ENCODE measurements at regions of chr17 and their contacts with region 1.

Region 1: DNA sequence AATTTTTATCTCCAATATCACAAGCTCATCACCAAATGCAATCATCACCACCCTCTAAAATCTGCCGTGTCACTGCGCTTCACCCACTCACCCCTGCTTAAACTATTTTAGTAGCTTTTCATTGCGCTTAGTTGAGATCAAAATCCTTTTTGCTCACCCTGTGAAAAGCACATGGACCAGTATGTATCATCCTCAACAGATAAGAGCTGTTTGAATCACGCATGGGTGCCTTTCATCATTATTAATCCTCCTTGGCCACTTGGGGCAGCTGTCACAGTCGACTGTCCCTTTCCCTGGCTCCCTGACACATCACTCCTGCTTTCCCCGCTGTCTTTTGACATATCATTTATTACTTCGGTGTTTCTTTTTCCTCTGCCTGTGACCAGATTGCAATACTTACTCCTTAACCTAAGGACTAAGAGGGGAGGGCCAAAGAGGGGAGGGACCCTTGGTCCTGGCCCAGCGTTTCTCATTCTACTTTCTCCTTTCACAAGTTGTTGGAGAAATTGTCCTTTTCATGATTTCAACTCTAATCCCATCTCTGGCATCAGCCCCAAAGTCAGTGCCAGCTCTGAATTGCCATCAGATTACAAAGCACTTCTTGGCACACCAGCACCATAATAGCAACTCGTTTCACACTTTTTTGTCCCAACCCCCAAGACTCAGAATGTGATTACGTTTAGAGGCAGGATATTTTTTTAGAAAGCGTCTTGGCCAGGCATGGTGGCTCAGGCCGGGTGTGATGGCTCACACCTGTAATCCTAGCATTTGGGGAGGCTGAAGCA is 8.6 kb upstream of the KDM6B start:
- DNase-seq: peak; percentile 15
- H3K4me3 ChIP-seq: no peak overlapping the region
- H3K27ac ChIP-seq: no peak overlapping the region
- H3K4me1 ChIP-seq: peaks cover 0 to 5% (median 0%) of the 10 kb centered on the region in 6 donors
- H3K27me3 ChIP-seq: peaks cover 0 to 6% (median 0%) of the 10 kb centered on the region in 7 donors
- CTCF ChIP-seq: no peak
- POLR2A ChIP-seq: no peak

Region 2: GRCh38 chr17:7862692-7863437 is 37.5 kb after region 1 on chr17:
- intact Hi-C with region 1: loop called (anchors 5 kb)
- DNase-seq: no peak
- H3K4me3 ChIP-seq: no peak overlapping the region
- H3K27ac ChIP-seq: no peak overlapping the region
- H3K4me1 ChIP-seq: peaks cover 7 to 46% (median 26%) of the 10 kb centered on the region in 6 donors
- H3K27me3 ChIP-seq: no peaks in the 10 kb centered on the region
- CTCF ChIP-seq: peak; percentile 61 to 95 (median 88)
- POLR2A ChIP-seq: no peak

Region 3: GRCh38 chr17:8057691-8058114 is 232.3 kb after region 1 on chr17:
- intact Hi-C with region 1: loop called (anchors 10 kb)
- DNase-seq: peak; percentile 53
- H3K4me3 ChIP-seq: no peak overlapping the region
- H3K27ac ChIP-seq: no peak overlapping the region
- H3K4me1 ChIP-seq: peaks cover 0 to 39% (median 27%) of the 10 kb centered on the region in 6 donors
- H3K27me3 ChIP-seq: peaks cover 0 to 56% (median 35%) of the 10 kb centered on the region in 7 donors
- CTCF ChIP-seq: peak; percentile 69 to 92 (median 83)
- POLR2A ChIP-seq: no peak

Region 4: DNA sequence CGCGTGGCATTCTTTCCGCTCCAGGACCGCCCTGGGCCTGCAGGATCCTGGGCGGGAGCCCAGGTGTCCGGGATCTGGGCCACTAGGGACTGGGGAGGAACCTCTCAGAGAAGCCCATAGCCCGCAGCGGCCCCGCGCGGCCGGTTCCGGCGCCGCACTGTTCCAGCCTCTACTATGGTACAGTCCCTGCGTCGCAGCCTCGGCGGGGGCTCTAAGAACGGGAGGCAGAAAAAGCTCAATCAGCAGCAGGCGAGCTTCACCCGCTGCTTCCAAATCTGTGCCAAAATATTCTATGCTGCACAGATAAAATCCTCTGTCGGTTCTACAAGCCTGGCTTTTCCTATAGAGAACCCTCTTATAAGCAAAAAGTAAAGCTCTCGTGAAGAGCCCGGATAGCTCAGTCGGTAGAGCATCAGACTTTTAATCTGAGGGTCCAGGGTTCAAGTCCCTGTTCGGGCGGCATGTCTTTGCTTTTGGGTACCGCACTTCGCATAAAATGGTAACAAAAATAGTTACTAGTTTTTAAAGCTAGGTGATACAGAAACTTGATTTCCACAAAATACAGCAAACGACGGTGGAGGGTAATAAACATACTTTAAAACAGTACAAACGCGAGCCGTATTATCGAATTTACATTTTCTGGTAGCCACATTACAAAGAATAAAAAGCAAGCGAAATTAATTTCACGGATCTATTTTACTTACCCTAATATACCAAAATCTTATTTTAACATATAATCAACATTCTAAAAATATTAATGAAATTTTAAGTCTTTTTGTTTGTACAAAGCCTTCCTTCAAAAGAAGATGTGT is 293.6 kb after region 1 on chr17:
- intact Hi-C with region 1: no loop called
- DNase-seq: peak; percentile 97
- H3K4me3 ChIP-seq: peak overlapping the region; percentile 46 to 86 (median 56)
- H3K27ac ChIP-seq: peak overlapping the region; percentile 55 to 89 (median 82)
- H3K4me1 ChIP-seq: peaks cover 49 to 75% (median 69%) of the 10 kb centered on the region in 6 donors
- H3K27me3 ChIP-seq: peaks cover 4 to 86% (median 45%) of the 10 kb centered on the region in 7 donors
- CTCF ChIP-seq: peak; percentile 59 to 93 (median 87)
- POLR2A ChIP-seq: no peak